SK-N-SH (cell line): ENCODE measurements at regions of chr7 and their contacts with region 1.

Region 1: DNA sequence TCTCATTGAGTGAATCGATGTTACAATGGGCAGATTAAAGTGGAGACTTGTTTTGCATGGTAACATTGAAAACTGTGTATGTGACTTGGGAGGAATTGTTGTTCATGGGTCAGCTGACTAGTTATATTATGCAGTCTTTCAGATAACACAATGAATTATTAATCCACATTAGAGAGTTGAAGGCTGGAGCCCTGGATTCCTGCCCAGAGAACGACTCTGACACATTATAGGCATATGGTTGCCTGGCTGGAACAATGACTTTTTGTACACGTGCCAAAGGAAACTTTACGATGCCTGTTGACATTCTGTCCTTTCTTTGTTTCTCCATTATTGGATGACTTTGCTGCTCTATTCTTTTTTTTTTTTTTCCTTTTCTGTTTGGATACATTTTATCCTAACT is 52.3 kb upstream of the TMEM229A start:
- DNase-seq: peak; percentile 41
- H3K4me3 ChIP-seq: peak overlapping the region in 1 of 2 experiments; percentile 0; a peak in 1 of 4 replicates
- H3K27ac ChIP-seq: peak overlapping the region; percentile 47 to 98; a peak in 3 of 4 replicates
- H3K4me1 ChIP-seq: peaks cover 24 to 46% of the 10 kb centered on the region in 2 experiments
- H3K27me3 ChIP-seq: no peaks in the 10 kb centered on the region
- CTCF ChIP-seq: no peak
- EP300 ChIP-seq: peak; percentile 46 to 99; a peak in 3 of 4 replicates
- RAD21 ChIP-seq: peak; percentile 29

Region 2: GRCh38 chr7:124072603-124073309 is 12.4 kb before region 1 on chr7:
- CTCF ChIA-PET with region 1: interaction called, 11 read pairs
- POLR2A ChIA-PET with region 1: interaction called, 26 read pairs
- DNase-seq: no peak
- H3K4me3 ChIP-seq: no peak overlapping the region
- H3K27ac ChIP-seq: peak overlapping the region; percentile 21 to 97; a peak in 3 of 4 replicates
- H3K4me1 ChIP-seq: peaks cover 14 to 44% of the 10 kb centered on the region in 2 experiments; a peak in 3 of 4 replicates
- H3K27me3 ChIP-seq: no peaks in the 10 kb centered on the region
- CTCF ChIP-seq: no peak
- EP300 ChIP-seq: no peak
- RAD21 ChIP-seq: no peak

Region 3: DNA sequence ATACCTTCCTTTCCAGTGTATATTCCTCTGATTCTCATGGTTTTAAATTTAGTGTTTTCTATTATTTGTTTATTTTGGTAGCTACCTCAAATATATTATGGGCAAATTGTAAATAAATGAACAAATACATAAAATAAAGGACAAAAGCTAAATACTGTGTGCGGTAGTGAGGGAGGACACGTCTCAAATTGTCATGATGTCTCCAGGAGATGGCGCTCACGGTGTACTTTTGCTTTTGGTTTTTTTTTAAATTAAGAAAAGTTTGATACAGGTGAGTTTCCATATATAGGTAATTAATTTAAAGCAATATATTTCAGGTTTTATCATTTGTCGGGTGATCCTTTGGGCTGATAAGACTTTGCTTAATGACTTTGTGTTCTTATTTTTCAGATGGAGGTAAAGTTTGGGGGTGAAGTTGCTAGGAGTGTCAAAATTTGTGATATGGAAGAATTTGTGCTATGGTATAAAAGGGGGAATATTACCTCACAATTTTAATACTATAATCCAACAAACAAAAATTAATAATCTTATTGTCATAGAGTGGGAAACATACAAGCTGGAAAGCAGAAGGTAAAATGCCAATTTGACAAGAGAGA is 16.1 kb after region 1 on chr7:
- CTCF ChIA-PET with region 1: interaction called, 12 read pairs
- POLR2A ChIA-PET with region 1: interaction called, 5 read pairs
- DNase-seq: peak; percentile 33
- H3K4me3 ChIP-seq: no peak overlapping the region
- H3K27ac ChIP-seq: no peak overlapping the region; a peak in 1 of 4 replicates
- H3K4me1 ChIP-seq: no peaks in the 10 kb centered on the region; a peak in 1 of 4 replicates
- H3K27me3 ChIP-seq: no peaks in the 10 kb centered on the region
- CTCF ChIP-seq: peak; percentile 69
- EP300 ChIP-seq: no peak
- RAD21 ChIP-seq: peak; percentile 64